Vagina (tissue), 2 donors: ENCODE measurements at regions of chr10 and their contacts with region 1.

Region 1: DNA sequence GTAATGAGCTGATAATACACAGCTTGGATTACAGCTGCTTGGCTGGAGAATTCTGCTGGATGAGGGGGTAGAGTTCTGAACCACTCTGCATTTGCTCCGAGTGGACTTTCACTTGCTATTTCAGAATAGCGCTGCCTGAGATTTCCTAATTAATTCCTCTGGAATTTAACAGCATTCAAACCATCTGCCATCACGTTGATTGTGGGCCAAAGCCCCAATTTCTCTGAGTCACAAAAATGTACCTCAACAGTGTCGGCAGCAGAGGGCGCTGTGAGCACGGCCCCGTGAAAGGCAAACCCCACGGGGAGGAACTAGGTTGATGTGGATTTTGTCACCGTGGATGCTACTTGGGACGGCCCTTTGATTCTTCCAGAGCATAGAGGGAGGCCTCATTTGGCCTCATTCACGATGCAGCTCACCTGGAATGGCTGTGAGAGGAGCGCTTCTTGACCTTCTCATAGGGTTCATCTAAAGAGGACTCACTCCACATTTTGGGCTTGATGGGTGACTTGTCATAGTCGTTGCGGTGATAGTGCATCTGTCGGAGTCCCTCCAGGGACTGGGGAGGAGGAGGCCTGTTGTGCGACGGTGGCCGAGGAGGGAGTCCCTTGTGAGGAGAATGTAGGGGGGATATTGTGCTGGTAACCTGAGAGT is 73.3 kb downstream of the PRPF18 start:
- DNase-seq: no peak
- H3K4me3 ChIP-seq: no peak overlapping the region
- H3K27ac ChIP-seq: peak overlapping the region; percentile 36
- H3K4me1 ChIP-seq: peaks cover 20% of the 10 kb centered on the region
- H3K27me3 ChIP-seq: no peaks in the 10 kb centered on the region
- CTCF ChIP-seq: peak; percentile 81 to 87 (median 86)
- POLR2A ChIP-seq: no peak

Region 2: DNA sequence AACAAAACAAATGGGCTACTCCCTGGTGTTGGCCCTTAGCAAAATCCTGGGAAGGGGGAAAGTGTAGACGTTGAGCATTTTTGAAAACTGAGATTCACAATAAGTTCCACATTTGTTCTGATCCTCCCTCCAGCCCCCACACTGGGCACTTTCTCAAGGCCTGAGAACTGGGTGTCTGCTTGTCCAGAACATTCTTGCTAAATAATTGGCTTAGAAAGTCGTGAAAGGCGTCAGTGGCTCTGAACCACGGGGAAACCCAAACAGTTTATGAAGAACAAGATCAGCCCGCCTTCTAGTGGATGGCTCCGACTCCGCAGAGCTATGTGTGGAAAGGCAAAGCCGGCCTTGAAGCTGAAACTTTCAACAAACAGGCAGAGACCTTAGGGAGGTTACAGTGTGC is 296.8 kb after region 1 on chr10:
- intact Hi-C with region 1: loop called (anchors 10 kb)
- DNase-seq: peak in 1 of 2 donors; percentile 98
- H3K4me3 ChIP-seq: peak overlapping the region in 1 of 2 donors; percentile 8
- H3K27ac ChIP-seq: peak overlapping the region; percentile 70
- H3K4me1 ChIP-seq: peaks cover 21% of the 10 kb centered on the region
- H3K27me3 ChIP-seq: no peaks in the 10 kb centered on the region
- CTCF ChIP-seq: peak in 1 of 3 experiments; percentile 57
- POLR2A ChIP-seq: no peak